Activated CD4-positive, alpha-beta T cell treated with anti-CD3 and anti-CD28 coated beads, Interleukin-2, amount 10 ng/mL, durations not matched to agents 24 days and 14 days (primary cell): ENCODE measurements at regions of chr6 and their contacts with region 1.

Region 1: DNA sequence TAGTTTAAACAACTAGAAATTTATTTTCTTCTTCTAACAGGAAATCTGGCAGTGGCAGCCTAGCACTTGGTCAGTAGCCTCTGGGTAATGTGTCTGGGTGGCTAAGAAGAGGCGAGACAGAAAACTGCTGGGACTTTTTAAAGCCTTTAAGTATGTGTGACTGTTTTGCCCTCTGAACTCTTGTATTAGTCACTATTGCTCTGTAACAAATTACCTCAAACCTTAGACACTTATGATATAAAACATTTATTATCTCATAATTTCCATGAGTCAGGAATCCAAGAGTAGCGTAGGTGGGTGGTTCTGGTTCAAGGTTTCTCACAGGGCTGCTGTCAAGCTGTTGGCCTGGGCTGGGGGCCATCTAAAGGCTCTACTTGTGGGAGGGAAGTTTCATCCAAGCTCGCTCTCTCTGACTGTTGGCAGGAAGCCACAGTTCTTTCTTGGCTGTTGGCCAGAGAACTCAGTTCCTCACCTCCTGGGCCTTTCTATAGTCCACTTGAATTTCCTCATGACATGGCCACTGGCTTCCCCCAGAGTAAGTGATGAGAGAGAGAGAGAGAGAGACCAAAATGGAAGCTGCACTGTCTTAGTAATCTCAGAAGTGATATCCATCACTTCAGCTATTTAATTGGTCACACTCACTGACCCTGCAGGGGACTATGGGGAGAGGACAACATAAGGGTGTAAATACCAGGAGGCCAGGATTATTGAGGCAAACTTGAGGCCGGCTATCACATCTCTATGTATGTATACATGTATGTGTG is 17.4 kb upstream of the TBC1D22B start:
- DNase-seq: peak; percentile 82
- H3K4me3 Mint-ChIP-seq: peak overlapping the region; percentile 49
- H3K27ac Mint-ChIP-seq: peak overlapping the region; percentile 96
- H3K4me1 Mint-ChIP-seq: peaks cover 38% of the 10 kb centered on the region
- H3K27me3 Mint-ChIP-seq: no peaks in the 10 kb centered on the region

Region 2: DNA sequence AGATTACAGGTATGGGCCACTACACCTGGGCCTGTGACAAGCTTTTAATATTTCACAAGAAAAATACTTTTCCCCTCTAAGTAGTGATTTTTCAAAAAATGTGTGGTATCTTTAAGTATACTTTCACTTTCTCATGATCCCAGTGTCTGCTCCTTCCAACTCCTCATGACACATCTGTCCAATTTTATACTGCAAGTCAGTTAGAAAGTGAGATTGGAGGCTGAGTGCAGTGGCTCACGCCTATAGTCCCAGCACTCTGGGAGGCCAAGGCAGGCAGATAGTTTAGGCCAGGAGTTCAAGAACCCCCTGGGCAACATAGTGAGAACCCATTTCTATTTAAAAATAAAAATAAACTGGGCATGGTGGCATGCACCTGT is 50.0 kb before region 1 on chr6:
- intact Hi-C with region 1: loop called (anchors 5 kb)
- DNase-seq: peak; percentile 73
- H3K4me3 Mint-ChIP-seq: peak overlapping the region; percentile 58
- H3K27ac Mint-ChIP-seq: peak overlapping the region; percentile 90
- H3K4me1 Mint-ChIP-seq: peaks cover 59% of the 10 kb centered on the region
- H3K27me3 Mint-ChIP-seq: no peaks in the 10 kb centered on the region

Region 3: DNA sequence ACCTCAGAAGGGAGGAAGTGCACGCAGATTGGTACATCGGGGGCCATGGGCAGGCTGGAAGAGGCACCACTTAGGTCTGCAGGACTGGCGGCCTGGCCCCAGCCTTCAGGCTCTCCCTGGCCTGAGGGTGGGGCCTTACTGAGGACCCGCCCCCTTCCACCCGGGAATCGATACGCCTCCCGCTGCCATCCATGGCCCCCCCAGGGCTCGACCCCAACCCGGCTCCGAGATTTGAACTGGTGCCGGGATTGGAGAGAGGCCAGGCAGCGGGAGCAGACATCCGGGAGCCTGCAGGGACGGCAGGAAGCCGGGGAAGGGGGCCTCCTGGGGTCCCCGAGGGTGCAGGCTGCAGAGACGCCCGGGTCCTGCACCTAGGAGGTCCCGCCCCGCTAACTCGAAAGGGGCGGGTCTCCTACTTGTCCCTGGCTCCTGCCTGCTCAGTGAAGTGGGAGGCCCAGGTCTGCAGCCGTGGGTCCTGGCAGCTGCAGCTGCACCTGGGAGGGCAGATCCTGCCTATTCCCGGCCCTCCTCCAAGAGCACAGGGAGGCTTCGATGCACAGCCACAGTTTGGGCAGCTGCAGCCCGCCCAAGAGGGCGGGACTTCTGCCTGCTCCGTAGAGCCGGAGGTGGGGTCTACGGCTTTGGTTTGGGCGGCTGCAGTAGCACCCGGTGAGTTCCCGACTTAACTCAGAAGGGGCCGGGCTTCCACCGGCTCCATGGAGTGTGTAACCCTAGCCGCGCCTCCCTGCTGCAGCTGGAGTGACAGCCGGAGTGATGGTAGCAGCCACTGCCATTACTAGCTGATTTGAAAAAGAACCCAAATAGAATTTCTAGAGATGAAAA is 17.8 kb before region 1 on chr6:
- intact Hi-C with region 1: loop called (anchors 1 kb)
- DNase-seq: peak; percentile 94
- H3K4me3 Mint-ChIP-seq: peak overlapping the region; percentile 84
- H3K27ac Mint-ChIP-seq: peak overlapping the region; percentile 69
- H3K4me1 Mint-ChIP-seq: peaks cover 34% of the 10 kb centered on the region
- H3K27me3 Mint-ChIP-seq: no peaks in the 10 kb centered on the region

Region 4: DNA sequence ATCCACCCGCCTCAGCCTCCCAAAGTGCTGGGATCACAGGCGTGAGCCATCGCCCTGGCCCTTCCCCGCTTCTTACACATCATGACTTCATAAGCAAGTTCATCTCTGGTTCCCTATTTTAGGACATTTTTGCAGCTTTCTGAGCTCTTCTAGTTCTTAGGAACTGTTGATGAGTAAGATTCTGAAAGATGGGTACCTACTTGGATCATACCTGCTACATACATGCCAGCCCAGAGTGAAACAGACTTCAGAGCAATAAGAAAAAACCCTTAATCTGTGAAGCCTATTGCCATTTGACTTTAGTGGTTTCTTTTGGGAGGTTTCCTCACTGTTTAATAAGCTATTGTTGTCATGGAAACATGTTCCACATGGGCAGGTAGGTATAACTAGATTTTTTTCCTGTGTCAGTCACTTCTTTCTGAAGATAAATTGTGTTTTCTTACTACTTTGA is 45.8 kb after region 1 on chr6:
- intact Hi-C with region 1: loop called (anchors 1 kb)
- DNase-seq: no peak
- H3K4me3 Mint-ChIP-seq: no peak overlapping the region
- H3K27ac Mint-ChIP-seq: peak overlapping the region; percentile 68
- H3K4me1 Mint-ChIP-seq: peaks cover 48% of the 10 kb centered on the region
- H3K27me3 Mint-ChIP-seq: no peaks in the 10 kb centered on the region

Region 5: DNA sequence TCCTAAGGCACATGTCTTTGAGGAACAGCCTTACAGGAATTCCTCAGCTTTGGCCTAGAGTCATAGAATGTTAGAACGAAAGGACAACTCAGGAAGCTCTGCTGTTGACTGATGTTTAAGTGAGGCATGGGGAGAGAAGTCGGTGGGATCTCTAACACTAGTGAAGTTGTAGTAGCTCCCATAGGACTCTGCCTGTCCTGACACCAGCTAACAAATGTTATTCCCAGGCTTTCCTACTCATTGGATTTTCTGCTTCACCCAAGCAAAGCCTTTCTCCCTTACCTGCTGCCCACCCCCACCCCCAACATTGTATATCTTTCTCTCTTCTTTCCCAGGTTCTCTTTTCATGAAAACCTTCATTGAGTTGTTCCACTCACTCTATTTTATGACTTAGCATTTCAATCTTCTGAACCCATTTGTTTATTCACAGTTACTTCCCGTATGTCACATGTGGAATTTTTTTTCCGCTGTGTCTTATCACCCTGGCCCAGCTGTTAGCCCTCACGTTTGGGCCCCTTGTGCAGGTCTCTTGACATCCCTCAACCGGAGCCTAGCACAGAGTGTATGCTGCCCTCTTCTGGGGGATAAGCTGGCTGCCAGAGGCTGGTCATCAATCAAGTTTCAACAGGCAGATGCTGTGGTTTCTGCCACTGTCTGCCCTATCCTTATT is 74.5 kb after region 1 on chr6:
- intact Hi-C with region 1: loop called (anchors 2 kb)
- DNase-seq: peak; percentile 87
- H3K4me3 Mint-ChIP-seq: no peak overlapping the region
- H3K27ac Mint-ChIP-seq: peak overlapping the region; percentile 12
- H3K4me1 Mint-ChIP-seq: peaks cover 12% of the 10 kb centered on the region
- H3K27me3 Mint-ChIP-seq: no peaks in the 10 kb centered on the region